ENCODE measurements at regions of chr10 and their contacts with region 1.

Region 1: DNA sequence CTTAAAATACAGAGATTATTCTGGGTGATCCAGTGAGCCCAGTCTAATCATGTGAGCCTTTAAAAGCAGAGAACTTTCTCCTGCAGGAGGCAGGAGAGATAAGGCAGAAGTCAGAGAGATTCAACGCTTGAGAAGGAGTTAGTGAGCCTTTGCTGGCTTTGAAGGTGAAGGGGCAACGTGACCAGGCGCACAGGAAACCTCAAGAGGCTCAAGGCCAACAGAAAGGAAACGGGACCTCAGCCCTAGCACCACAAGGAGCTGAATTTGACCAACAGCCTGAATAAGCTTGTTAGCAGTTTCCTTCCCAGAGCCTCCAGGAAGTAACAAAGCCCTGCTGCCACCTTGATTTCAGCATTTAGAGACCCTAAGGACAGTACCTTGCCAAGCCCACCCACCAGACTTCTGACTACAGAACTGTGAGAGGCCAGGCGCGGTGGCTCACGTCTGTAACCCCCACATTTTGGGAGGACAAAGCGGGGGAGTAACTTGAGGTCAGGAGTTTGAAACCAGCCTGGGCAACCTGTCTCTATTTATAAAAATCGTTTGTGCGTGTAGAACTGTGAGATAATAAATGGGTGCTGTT is 87.3 kb upstream of the KAT6B start:
- DNase-seq: peak; percentile 94
- ATAC-seq: peak; percentile 93
- H3K4me3 ChIP-seq: peak overlapping the region; percentile 42; the same call in 1 of the 2 replicates
- H3K27ac ChIP-seq: peak overlapping the region; percentile 97
- H3K4me1 ChIP-seq: peaks cover 24% of the 10 kb centered on the region
- H3K27me3 ChIP-seq: no peaks in the 10 kb centered on the region
- CTCF ChIP-seq: peak; percentile 48 to 61 (median 50)
- EP300 ChIP-seq: peak in 1 of 2 experiments; percentile 31; a peak in 2 of 4 replicates
- POLR2A ChIP-seq: no peak
- RAD21 ChIP-seq: peak; percentile 77

Region 2: DNA sequence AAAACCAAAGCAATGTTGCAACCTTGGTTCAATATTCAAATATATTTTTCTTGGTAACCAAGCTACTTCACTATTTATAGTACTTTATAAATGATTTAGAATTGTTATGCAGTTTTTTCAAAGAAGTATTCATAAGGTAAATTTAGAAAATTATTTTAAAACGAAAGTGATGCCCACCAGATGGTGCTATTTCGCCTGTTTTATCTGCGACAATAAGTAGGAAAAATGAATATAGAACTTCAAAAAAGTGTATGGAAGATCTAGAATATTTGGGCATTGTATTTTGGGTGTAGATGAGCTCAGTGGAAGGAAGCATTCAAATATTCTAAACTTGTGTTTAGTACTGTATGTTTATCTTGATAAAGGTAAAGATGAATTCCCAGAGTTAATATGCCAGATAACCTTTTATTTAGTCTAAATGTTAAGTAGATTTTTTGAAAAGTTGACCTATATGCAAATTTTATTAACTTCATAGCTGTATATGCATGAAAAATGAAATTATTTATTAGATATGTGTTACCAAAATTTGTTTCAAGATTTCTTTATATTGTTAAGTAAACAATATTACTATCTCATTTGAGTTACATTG is 494.9 kb before region 1 on chr10:
- CTCF ChIA-PET with region 1: interaction called, 4 read pairs
- POLR2A ChIA-PET with region 1: no interaction called
- RAD21 ChIA-PET with region 1: no interaction called
- SMC1A ChIA-PET with region 1: interaction called, 16 read pairs
- in situ Hi-C with region 1: no loop called
- intact Hi-C with region 1: no loop called
- DNase-seq: no peak
- ATAC-seq: no peak
- H3K4me3 ChIP-seq: no peak overlapping the region
- H3K27ac ChIP-seq: no peak overlapping the region
- H3K4me1 ChIP-seq: no peaks in the 10 kb centered on the region
- H3K27me3 ChIP-seq: no peaks in the 10 kb centered on the region
- CTCF ChIP-seq: peak; percentile 16 to 48 (median 40); a peak in 3 of 6 replicates
- EP300 ChIP-seq: no peak
- POLR2A ChIP-seq: no peak
- RAD21 ChIP-seq: peak; percentile 61

Region 3: DNA sequence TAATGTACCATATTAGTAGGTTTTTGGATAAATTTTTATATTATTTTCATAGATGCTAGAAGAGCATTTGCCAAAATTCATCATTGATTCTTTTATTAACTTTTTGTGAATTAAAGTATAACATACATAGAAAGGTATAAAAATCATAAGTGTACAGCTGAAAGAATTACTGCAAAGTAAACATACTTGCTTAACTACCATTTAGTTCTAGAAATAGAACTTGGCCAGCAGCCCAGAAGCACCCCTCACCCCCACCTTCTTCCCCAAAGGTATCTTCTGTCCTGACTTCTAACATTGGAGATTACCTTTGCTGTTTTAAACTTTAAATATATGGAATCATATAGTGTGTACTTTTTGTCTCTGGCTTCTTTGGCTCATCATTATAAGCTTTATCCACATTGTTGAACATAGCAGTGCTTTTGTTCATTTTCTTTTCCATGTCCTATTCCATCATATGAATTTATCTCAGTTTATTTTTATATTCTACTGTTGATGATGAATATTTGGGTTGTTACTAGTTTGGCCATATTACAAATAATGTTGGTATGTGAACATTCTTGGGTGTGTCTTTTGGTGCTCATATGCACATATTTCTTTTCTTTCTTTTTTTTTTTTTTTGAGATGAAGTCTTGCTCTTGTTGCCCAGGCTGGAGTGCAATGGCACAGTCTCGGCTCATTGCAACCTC is 445.2 kb before region 1 on chr10:
- CTCF ChIA-PET with region 1: no interaction called
- POLR2A ChIA-PET with region 1: interaction called, 10 read pairs
- RAD21 ChIA-PET with region 1: no interaction called
- SMC1A ChIA-PET with region 1: no interaction called
- in situ Hi-C with region 1: no loop called
- intact Hi-C with region 1: no loop called
- DNase-seq: no peak
- ATAC-seq: no peak
- H3K4me3 ChIP-seq: no peak overlapping the region
- H3K27ac ChIP-seq: no peak overlapping the region
- H3K4me1 ChIP-seq: no peaks in the 10 kb centered on the region
- H3K27me3 ChIP-seq: no peaks in the 10 kb centered on the region
- CTCF ChIP-seq: no peak
- EP300 ChIP-seq: no peak
- POLR2A ChIP-seq: no peak
- RAD21 ChIP-seq: no peak

Region 4: DNA sequence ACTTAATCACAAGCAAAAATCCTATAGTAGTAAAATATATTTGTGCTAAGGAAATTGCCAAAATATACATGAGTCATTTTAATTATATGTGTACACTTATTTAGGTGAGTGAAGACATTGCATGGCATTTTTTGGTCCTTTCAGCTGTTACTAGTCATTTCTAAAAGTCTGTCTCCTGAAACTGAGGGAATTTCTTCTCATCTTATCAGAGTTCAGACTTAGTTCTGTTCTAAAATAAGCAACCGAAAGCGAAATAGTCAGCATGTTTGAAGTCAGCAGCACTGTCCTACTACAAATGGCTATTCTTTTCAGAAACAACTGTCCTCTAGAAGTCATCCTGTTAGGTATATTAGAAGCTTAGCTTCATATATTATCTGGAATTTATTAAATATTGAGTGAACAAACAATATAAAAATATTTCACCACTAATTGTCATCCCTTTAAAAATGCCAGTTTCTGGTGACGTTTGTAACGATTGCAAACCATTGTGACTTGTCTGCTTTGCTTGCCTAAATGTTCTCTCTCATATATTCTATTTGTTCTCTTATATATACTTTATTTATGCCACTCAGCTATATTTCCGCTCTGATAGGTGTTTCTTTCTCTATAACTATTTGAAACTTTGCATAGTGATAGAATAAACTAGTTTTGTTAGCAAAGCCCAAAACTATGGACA is 140.0 kb before region 1 on chr10:
- CTCF ChIA-PET with region 1: interaction called, 8 read pairs
- POLR2A ChIA-PET with region 1: interaction called, 3 read pairs
- RAD21 ChIA-PET with region 1: interaction called, 6 read pairs
- SMC1A ChIA-PET with region 1: interaction called, 10 read pairs
- in situ Hi-C with region 1: no loop called
- intact Hi-C with region 1: no loop called
- DNase-seq: peak; percentile 78
- ATAC-seq: peak; percentile 95
- H3K4me3 ChIP-seq: no peak overlapping the region
- H3K27ac ChIP-seq: peak overlapping the region; percentile 46
- H3K4me1 ChIP-seq: peaks cover 19% of the 10 kb centered on the region
- H3K27me3 ChIP-seq: no peaks in the 10 kb centered on the region
- CTCF ChIP-seq: no peak
- EP300 ChIP-seq: peak; percentile 75; a peak in 2 of 4 replicates
- POLR2A ChIP-seq: no peak
- RAD21 ChIP-seq: no peak

Region 5: DNA sequence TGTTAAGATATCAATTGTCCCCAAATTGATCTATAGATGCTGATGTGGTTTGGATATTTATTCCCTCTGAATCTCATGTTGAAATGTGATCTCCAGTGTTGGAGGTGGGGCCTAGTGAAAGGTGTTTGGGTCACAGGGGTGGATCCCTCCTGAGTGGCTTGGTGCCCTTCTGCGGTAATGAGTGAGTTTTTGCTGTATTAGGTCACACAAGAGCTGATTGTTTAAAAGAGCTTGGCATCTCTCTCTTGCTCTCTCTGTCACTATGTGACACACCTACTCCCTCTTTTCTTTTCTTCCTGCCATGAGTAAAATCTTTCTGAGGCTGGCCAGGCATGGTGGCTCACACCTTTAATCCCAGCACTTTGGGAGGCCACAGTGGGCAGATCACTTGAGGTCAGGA is 10.9 kb before region 1 on chr10:
- CTCF ChIA-PET with region 1: interaction called, 5 read pairs
- POLR2A ChIA-PET with region 1: interaction called, 10 read pairs
- RAD21 ChIA-PET with region 1: no interaction called
- SMC1A ChIA-PET with region 1: interaction called, 3 read pairs
- in situ Hi-C with region 1: no loop called
- intact Hi-C with region 1: no loop called
- DNase-seq: no peak
- ATAC-seq: no peak
- H3K4me3 ChIP-seq: no peak overlapping the region
- H3K27ac ChIP-seq: no peak overlapping the region
- H3K4me1 ChIP-seq: no peaks in the 10 kb centered on the region
- H3K27me3 ChIP-seq: no peaks in the 10 kb centered on the region
- CTCF ChIP-seq: no peak
- EP300 ChIP-seq: no peak
- POLR2A ChIP-seq: no peak
- RAD21 ChIP-seq: no peak

Region 6: DNA sequence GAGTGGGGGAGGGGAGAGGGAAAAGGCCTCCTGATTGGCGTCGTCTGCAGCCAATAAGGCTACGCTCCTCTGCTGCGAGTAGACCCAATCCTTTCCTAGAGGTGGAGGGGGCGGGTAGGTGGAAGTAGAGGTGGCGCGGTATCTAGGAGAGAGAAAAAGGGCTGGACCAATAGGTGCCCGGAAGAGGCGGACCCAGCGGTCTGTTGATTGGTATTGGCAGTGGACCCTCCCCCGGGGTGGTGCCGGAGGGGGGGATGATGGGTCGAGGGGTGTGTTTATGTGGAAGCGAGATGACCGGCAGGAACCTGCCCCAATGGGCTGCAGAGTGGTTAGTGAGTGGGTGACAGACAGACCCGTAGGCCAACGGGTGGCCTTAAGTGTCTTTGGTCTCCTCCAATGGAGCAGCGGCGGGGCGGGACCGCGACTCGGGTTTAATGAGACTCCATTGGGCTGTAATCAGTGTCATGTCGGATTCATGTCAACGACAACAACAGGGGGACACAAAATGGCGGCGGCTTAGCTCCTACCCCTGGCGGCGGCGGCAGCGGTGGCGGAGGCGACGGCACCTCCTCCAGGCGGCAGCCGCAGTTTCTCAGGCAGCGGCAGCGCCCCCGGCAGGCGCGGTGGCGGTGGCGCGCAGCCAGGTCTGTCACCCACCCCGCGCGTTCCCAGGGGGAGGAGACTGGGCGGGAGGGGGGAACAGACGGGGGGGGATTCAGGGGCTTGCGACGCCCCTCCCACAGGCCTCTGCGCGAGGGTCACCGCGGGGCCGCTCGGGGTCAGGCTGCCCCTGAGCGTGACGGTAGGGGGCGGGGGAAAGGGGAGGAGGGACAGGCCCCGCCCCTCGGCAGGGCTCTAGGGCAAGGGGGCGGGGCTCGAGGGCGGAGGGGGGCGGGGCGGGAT is 87.3 kb after region 1 on chr10 and contains the start of gene KAT6B:
- CTCF ChIA-PET with region 1: interaction called, 17 read pairs
- POLR2A ChIA-PET with region 1: interaction called, 7 read pairs
- RAD21 ChIA-PET with region 1: interaction called, 11 read pairs
- SMC1A ChIA-PET with region 1: interaction called, 22 read pairs
- in situ Hi-C with region 1: no loop called
- intact Hi-C with region 1: loop called (anchors 1 kb)
- DNase-seq: peak; percentile 100
- ATAC-seq: peak; percentile 90
- H3K4me3 ChIP-seq: peak within 1 kb of the TSS; percentile 93
- H3K27ac ChIP-seq: peak within 1 kb of the TSS; percentile 91
- H3K4me1 ChIP-seq: peaks cover 9% of the 10 kb centered on the region; the same call in 1 of the 2 replicates
- H3K27me3 ChIP-seq: no peaks in the 10 kb centered on the region
- CTCF ChIP-seq: peak; percentile 11 to 41 (median 17); a peak in 3 of 6 replicates
- EP300 ChIP-seq: 0 out of 4 replicates have a peak, but pooled peaks of 1 of the 2 experiments have one; percentile 34
- POLR2A ChIP-seq: peak; percentile 87
- RAD21 ChIP-seq: no peak; the same call in 1 of the 2 replicates
- polyA plus RNA-seq, gene KAT6B: 2.7 to 5.3 TPM

Measured in GM12878 (cell line).